ENCODE measurements at regions of chr9 and their contacts with region 1.

Region 1: DNA sequence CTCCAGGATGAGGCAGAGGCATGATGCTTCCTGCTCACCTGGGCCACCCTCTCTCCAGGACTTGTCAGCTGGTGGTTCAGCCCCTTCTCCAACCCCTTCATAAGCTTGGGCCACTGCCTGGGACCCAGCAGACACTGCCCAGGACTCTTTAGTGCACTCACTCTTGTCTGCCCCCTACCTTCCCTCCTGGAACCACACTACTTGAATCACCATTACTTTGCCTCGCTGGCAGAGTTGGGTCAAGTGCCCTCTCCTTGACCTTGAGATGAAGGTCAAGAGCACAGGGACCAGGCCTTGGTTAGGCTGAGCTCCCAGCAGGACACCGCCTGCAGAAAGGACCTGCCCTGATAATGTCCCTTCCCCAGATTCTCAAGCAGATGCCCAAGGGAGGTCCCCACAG is 8.5 kb upstream of the ENDOG start:
- DNase-seq: no peak

Region 2: GRCh38 chr9:128724744-128725211 is 85.1 kb before region 1 on chr9:
- in situ Hi-C with region 1: loop called (anchors 5 kb)
- DNase-seq: peak; percentile 97

Region 3: DNA sequence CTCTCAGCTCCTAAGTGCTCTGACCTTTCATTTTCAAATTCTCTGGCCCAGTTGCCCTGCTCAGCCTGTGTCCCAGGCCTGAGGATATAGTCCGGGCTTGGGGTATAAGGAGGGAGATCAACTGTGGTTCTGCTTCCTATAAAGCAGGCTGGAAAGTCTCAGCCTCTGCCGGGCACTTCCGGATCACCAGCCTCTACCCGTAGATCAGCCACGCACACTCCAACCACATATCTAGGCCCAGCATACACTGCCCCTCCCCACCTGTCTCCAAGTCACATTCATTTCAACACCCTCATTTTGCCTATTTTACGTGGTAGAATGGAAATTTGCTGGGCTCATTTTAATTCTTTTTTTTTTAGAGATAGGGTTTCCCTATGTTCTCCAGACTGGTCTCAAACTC is 41.2 kb before region 1 on chr9:
- in situ Hi-C with region 1: loop called (anchors 5 kb)
- DNase-seq: no peak

Region 4: DNA sequence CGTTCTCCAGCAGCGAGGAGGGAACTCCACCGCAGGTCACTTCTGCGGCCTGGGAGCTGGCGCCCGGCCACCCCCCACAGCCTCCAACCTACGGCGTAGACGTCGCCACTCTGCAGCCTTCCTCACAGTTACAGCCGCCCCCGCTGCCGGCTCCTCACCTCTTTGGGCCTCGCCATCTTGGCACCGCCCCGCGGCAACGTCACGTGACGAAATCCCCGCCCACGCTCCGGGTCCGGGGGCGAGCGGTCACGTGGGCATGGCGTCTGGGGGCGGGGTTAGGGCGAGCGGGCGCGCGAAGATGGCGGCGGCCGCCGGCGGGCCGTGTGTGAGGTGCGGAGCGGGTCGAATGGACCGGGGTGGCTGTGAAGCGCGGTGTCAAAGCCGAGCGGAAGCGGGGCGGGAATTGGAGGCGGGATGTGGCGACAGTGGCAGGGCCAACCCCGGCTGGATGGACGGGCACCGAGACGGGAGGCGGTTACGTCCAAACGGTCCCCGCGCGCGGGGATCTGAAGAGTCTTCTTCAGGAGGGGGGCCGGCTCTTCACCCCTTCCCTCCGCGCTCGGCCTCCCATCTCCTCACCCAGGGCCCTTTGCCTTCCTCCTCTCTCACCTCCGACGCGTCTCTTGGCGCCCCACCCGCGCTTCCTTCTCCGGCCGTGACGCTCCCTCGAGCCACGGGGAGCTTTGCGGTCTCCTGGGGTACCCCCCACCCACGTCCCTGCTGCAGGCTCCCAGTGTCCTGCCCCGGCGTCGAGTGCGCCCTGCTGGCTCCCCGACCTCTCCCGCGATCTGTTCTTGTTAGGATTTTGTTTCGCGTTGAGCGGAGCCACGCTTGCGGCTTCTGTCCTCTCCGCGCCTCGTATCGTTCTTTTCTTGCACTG is 137.8 kb after region 1 on chr9 and contains the starts of genes DOLK and NUP188:
- in situ Hi-C with region 1: no loop called
- DNase-seq: peak; percentile 93
- total RNA-seq, gene DOLK: 33.7 and 38.6 TPM in 2 replicates
- total RNA-seq, gene NUP188: 33.2 and 68.6 TPM in 2 replicates

Measured in G401 (cell line).